HCT116 (cell line): ENCODE measurements at regions of chr10 and their contacts with region 1.

Region 1: DNA sequence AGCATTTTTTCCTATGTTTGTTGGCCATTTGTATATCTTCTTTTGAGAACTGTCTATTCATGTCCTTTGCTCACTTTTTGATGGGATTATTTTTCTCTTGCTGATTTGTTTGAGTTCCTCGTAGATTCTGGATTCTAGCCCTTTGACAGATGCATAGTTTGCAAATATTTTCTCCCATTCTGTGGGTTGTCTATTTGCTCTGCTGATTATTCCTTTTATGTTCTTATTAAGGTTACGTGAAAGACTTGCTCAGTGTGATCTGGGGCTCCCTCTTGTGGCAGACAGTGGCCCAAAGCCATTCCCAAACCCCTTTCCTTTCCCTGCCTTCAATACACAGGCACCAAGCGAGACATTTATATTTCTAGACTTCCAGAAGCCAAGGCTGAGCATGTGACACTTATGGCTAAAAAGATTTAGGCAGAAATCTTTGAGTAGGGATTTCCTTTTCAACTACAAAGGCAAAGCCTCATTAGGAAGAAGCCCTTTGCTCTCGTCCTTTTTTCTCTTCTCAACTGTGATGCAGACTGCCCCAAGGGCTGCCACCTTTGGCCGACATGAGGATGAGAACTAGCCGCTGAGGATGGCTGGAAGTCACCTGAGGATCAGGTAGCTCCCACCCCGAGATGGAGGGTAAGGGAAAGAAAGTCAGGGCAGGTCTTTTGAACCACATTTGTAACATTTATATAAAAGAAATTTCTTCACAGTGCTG is 23.6 kb downstream of the ST8SIA6 start:
- DNase-seq: peak; percentile 54
- ATAC-seq: peak; percentile 95
- H3K4me3 ChIP-seq: no peak overlapping the region
- H3K27ac ChIP-seq: no peak overlapping the region
- H3K4me1 ChIP-seq: peaks cover 0 to 4% of the 10 kb centered on the region in 2 experiments; a peak in 1 of 4 replicates
- H3K27me3 ChIP-seq: no peaks in the 10 kb centered on the region
- CTCF ChIP-seq: peak; percentile 79 to 89 (median 89); a peak in 5 of 6 replicates
- POLR2A ChIP-seq: no peak
- RAD21 ChIP-seq: peak; percentile 88

Region 2: GRCh38 chr10:16828114-16828568 is 602.7 kb before region 1 on chr10:
- CTCF ChIA-PET with region 1: no interaction called
- POLR2A ChIA-PET with region 1: no interaction called
- RAD21 ChIA-PET with region 1: no interaction called
- intact Hi-C with region 1: loop called (anchors 1 kb)
- DNase-seq: peak; percentile 83
- ATAC-seq: peak; percentile 90
- H3K4me3 ChIP-seq: no peak overlapping the region
- H3K27ac ChIP-seq: no peak overlapping the region
- H3K4me1 ChIP-seq: no peaks in the 10 kb centered on the region; a peak in 1 of 4 replicates
- H3K27me3 ChIP-seq: no peaks in the 10 kb centered on the region
- CTCF ChIP-seq: peak; percentile 46 to 57 (median 54); a peak in 5 of 6 replicates
- POLR2A ChIP-seq: no peak
- RAD21 ChIP-seq: peak; percentile 83

Region 3: DNA sequence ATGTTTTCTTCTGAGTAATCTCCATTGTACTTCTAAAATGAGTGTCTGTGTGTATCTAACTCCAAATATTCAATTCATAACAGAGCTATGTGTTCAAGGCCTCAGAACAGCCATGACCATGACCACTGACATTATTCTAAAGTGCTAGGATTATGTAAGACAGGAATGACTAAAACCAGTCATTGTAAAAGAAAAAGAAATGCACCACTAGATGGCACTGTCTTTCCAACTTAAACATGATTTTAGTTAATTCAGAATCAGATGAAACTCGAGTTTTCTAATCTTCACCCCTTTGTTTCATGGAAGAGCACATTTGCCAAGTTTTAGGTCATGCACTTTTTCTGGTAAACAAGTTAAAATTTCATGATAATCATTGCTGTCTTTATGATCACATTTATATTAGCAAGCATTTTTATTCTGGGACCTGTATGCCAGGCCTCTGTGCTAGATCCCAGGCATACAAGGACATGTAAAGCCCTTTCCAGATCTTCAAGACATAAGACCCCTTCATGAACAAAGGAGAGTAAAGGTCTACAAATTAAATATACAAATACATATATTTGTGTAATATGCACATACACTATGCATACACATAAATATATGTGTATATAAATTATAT is 587.4 kb before region 1 on chr10:
- CTCF ChIA-PET with region 1: no interaction called
- POLR2A ChIA-PET with region 1: no interaction called
- RAD21 ChIA-PET with region 1: no interaction called
- intact Hi-C with region 1: loop called (anchors 2 kb)
- DNase-seq: peak; percentile 58
- ATAC-seq: peak; percentile 68
- H3K4me3 ChIP-seq: no peak overlapping the region
- H3K27ac ChIP-seq: no peak overlapping the region
- H3K4me1 ChIP-seq: no peaks in the 10 kb centered on the region
- H3K27me3 ChIP-seq: no peaks in the 10 kb centered on the region
- CTCF ChIP-seq: peak; percentile 23 to 74 (median 72); a peak in 4 of 6 replicates
- POLR2A ChIP-seq: no peak
- RAD21 ChIP-seq: peak; percentile 82

Region 4: DNA sequence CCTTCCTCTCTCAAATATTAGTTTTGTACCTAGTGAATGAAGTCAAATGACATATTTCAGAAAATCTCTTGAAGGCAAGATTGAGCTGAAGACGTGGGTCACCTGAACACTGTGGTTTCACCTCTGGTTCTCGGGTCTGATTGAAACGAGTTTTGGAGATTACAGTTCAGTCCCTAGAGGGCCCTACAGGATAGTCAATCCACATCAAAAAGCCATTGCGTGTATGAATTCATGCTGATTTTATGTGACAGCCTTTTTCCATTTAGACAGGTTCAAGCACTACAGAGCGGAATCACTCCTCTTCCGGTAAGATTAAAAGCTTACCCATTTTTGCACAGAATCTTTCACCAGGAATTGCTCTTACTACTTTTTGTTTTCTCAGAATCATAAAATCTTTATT is 140.6 kb before region 1 on chr10:
- CTCF ChIA-PET with region 1: interaction called, 7 read pairs
- POLR2A ChIA-PET with region 1: no interaction called
- RAD21 ChIA-PET with region 1: no interaction called
- intact Hi-C with region 1: loop called (anchors 1 kb)
- DNase-seq: peak; percentile 50
- ATAC-seq: peak; percentile 88
- H3K4me3 ChIP-seq: no peak overlapping the region
- H3K27ac ChIP-seq: no peak overlapping the region
- H3K4me1 ChIP-seq: peaks cover 0 to 9% of the 10 kb centered on the region in 2 experiments; a peak in 2 of 4 replicates
- H3K27me3 ChIP-seq: no peaks in the 10 kb centered on the region
- CTCF ChIP-seq: peak; percentile 38 to 68 (median 66)
- POLR2A ChIP-seq: no peak
- RAD21 ChIP-seq: peak; percentile 87